ENCODE measurements at regions of chr16 and their contacts with region 1.

Region 1: DNA sequence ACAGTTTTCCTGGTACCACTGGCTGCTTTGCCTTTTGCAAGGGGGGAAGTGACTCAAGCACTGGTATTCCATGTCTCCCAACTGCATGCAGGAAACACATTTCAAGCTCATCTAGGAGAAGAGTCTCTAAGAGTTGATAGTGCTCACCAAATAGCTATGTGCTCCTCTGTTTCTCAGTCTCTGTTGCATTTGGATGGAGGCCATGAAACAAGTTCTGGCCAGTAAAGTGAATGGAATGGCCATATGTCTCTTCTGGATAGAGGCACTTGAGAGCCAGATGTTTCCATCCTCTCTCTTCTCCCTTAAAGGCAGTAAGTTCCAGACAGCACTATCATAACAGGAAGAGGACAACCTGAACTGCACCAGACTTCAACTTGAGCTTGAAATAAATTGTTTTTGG is 60.6 kb downstream of the C16orf82 start:
- DNase-seq: no peak
- ATAC-seq: no peak
- H3K4me3 ChIP-seq: no peak overlapping the region
- H3K27ac ChIP-seq: no peak overlapping the region
- H3K4me1 ChIP-seq: no peaks in the 10 kb centered on the region
- H3K27me3 ChIP-seq: no peaks in the 10 kb centered on the region
- CTCF ChIP-seq: no peak
- POLR2A ChIP-seq: no peak

Region 2: GRCh38 chr16:26204138-26204537 is 923.2 kb before region 1 on chr16:
- intact Hi-C with region 1: no loop called
- DNase-seq: no peak
- ATAC-seq: no peak
- H3K4me3 ChIP-seq: no peak overlapping the region
- H3K27ac ChIP-seq: no peak overlapping the region
- H3K4me1 ChIP-seq: no peaks in the 10 kb centered on the region
- H3K27me3 ChIP-seq: no peaks in the 10 kb centered on the region
- CTCF ChIP-seq: no peak
- POLR2A ChIP-seq: no peak

Region 3: DNA sequence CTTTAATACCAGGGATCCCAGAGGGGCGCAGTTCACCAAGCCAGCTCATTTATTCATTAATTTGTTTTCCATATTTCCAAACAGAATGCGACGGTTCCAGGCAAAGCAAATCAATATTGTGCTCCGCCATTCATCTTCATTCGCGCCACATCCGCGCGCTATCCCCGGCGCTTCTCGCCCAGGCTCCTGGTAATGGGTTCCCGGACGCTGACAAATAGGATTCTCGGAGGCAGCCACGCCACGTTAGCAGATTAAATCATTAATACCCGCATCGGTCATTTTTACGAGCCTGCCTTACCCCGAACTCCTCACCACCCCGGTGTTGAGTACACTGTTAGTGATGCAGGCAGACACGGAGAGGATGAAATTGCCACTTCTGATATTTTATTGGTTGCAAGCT is 86.6 kb before region 1 on chr16:
- intact Hi-C with region 1: no loop called
- DNase-seq: no peak
- ATAC-seq: no peak
- H3K4me3 ChIP-seq: no peak overlapping the region
- H3K27ac ChIP-seq: no peak overlapping the region
- H3K4me1 ChIP-seq: no peaks in the 10 kb centered on the region
- H3K27me3 ChIP-seq: no peaks in the 10 kb centered on the region
- CTCF ChIP-seq: no peak
- POLR2A ChIP-seq: no peak

Region 4: GRCh38 chr16:27066668-27067537 is 60.4 kb before region 1 on chr16 and contains the start of gene C16orf82:
- intact Hi-C with region 1: loop called in 1 of 2 experiments (anchors 10 kb)
- DNase-seq: no peak
- ATAC-seq: no peak
- H3K4me3 ChIP-seq: no peak within 1 kb of the TSS
- H3K27ac ChIP-seq: no peak within 1 kb of the TSS
- H3K4me1 ChIP-seq: no peaks in the 10 kb centered on the region
- H3K27me3 ChIP-seq: no peaks in the 10 kb centered on the region
- CTCF ChIP-seq: no peak
- POLR2A ChIP-seq: no peak
- total RNA-seq, gene C16orf82: not detected